Dorsolateral prefrontal cortex (tissue), 120 donors: ENCODE measurements at regions of chr22 and their contacts with region 1.

Region 1: GRCh38 chr22:45435544-45436139 is 22.1 kb downstream of the RIBC2 start:
- DNase-seq: peak; percentile 75 to 88 (median 82)
- H3K4me3 ChIP-seq: peak overlapping the region in 11 of 59 donors; percentile 10 to 35 (median 19)
- H3K27ac ChIP-seq: peak overlapping the region in 19 of 59 donors; percentile 7 to 71 (median 36)
- H3K27me3 ChIP-seq: no peaks in the 10 kb centered on the region
- CTCF ChIP-seq: peak; percentile 90 to 99 (median 98)

Region 2: DNA sequence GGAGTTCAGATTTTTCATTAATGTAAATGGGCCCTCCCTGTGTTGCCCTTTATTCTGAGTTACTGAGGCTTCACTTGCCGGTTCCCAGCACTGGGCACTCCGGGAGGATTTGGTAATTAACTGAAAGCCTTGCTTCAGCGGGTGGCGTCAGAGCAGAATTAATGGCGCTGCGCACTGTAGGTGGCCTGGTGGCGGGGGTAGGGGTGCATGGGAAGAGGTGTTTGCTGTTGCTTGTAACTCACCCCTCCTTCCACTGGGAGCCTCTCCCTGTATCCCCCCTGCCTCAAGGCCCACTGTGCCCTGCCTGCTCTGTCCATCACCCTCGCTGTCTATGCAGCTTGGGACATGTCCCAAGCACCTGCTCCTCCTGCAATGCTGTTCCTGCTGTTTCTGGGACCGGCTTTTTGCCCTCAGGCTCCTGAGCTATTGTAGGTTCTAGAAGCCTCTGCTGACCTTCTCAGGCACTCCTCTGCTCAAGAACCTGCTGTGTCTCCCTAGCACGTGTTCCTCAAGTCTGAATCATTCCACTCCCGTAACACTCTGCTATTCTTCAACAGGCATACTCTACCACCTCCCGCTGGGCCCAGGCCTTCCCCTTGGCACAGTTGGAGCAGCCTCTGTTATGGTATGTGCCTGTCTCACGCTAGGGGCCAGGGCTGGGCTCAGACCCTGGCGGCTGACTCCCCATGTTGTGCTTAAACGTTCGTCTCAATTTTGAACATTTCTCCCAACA is 658.9 kb before region 1 on chr22:
- intact Hi-C with region 1: no loop called
- DNase-seq: no peak
- H3K4me3 ChIP-seq: no peak overlapping the region
- H3K27ac ChIP-seq: no peak overlapping the region
- H3K27me3 ChIP-seq: peaks cover 0 to 5% (median 0%) of the 10 kb centered on the region in 45 donors
- CTCF ChIP-seq: no peak

Region 3: GRCh38 chr22:45309472-45310227 is 126.0 kb before region 1 on chr22 and contains the start of gene FAM118A:
- intact Hi-C with region 1: loop called in 1 of 2 experiments (anchors 2 kb)
- DNase-seq: peak; percentile 87 to 98 (median 94)
- H3K4me3 ChIP-seq: peak within 1 kb of the TSS; percentile 62 to 100 (median 92)
- H3K27ac ChIP-seq: peak within 1 kb of the TSS in 57 of 59 donors; percentile 2 to 93 (median 84)
- H3K27me3 ChIP-seq: no peaks in the 10 kb centered on the region
- CTCF ChIP-seq: peak in 40 of 56 donors; percentile 5 to 57 (median 26)
- total RNA-seq, gene FAM118A: 13.8 to 116 (median 36.6) TPM

Region 4: DNA sequence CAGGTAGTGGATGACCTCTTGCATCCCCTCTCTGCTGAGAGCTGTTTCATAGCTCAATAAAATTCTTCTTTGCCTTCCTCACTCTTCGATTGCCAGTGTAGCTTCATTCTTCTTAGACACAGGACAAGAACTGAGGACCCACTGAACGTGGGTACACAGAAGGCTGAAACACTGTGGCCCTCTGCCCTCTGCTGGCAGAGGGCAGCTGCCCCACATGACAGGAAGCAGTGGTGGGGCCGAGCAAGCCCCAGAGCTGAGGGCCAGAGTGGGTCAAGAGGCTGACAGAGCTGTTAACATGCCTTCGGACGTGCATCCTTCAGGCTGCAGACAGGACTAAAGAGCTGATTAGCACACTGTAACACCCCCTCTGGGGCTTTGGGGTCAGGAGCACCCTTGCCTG is 37.8 kb before region 1 on chr22:
- intact Hi-C with region 1: no loop called
- DNase-seq: no peak
- H3K4me3 ChIP-seq: no peak overlapping the region
- H3K27ac ChIP-seq: no peak overlapping the region
- H3K27me3 ChIP-seq: peaks cover 0 to 7% (median 0%) of the 10 kb centered on the region in 45 donors
- CTCF ChIP-seq: no peak

Region 5: DNA sequence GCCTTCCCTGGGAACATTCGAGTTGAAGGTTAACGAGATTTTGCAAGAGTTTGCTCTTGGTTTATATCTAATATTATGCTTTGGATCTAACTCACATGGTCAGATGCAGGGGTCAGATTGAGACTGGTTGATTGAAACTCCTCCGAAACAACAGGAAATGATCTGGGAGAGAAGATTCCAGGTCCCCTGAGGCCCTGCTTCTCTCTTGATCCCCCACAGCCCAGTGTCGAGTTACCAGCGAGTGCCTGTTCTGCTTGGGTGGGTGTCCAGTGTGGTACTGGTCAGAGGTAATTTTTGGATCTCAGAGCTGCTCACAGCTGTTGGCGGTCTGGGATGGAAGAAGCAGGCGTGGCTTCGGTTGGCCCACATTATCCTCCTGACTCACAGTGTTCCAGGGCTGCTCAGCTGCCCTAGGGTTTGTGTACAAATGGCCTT is 76.2 kb after region 1 on chr22:
- intact Hi-C with region 1: no loop called
- DNase-seq: no peak
- H3K4me3 ChIP-seq: no peak overlapping the region
- H3K27ac ChIP-seq: peak overlapping the region in 26 of 59 donors; percentile 3 to 80 (median 42)
- H3K27me3 ChIP-seq: peaks cover 0 to 14% (median 0%) of the 10 kb centered on the region in 45 donors
- CTCF ChIP-seq: no peak

Region 6: DNA sequence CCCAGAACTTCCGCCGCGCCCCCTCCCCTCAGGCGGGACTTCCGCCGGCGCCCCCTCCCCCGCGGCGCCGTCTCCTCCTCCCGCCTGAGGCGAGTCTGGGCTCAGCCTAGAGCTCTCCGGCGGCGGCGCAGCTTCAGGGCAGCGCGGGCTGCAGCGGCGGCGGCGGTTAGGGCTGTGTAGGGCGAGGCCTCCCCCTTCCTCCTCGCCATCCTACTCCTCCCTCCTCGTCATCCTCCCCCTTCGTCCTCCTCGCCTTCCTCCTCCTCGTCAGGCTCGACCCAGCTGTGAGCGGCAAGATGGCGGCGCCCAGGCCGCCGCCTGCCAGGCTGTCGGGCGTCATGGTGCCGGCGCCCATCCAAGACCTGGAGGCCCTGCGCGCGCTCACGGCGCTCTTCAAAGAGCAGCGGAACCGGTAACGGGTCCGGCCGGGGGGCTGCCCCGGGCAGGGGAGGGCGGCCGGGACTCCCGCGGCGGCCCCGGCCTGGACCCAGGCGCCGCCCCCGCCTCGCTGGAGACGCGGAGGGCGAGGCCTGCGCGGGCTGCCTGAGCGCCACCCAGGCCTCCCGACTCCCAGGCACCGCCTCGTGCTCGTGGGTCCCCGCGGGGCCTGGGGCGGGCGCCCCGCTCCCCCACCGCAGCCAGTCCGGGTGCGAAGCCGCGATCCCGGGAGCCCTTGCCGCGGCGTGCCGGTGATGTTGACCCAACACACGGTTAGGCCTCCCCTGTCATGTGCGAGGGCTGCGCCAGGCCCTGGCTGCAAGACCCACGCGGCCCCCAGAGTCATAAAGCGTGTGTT is 236.3 kb after region 1 on chr22 and contains the start of gene ATXN10:
- intact Hi-C with region 1: no loop called
- DNase-seq: peak; percentile 53 to 87 (median 66)
- H3K4me3 ChIP-seq: peak within 1 kb of the TSS; percentile 56 to 96 (median 85)
- H3K27ac ChIP-seq: peak within 1 kb of the TSS; percentile 51 to 96 (median 89)
- H3K27me3 ChIP-seq: no peaks in the 10 kb centered on the region
- CTCF ChIP-seq: peak in 1 of 56 donors; percentile 25
- total RNA-seq, gene ATXN10: 180 to 317 (median 244) TPM